ENCODE measurements at regions of chr6 and their contacts with region 1.

Region 1: GRCh38 chr6:145015739-145016558 is 719.4 kb downstream of the EPM2A start:
- DNase-seq: peak; percentile 56
- ATAC-seq: peak; percentile 99
- H3K4me3 Mint-ChIP-seq: no peak overlapping the region
- H3K27ac Mint-ChIP-seq: no peak overlapping the region
- H3K4me1 Mint-ChIP-seq: peaks cover 16% of the 10 kb centered on the region
- H3K27me3 Mint-ChIP-seq: peaks cover 14% of the 10 kb centered on the region

Region 2: GRCh38 chr6:144602523-144603180 is 413.3 kb before region 1 on chr6:
- CTCF ChIA-PET with region 1: no interaction called
- POLR2A ChIA-PET with region 1: no interaction called
- intact Hi-C with region 1: loop called in 1 of 2 experiments (anchors 5 kb)
- DNase-seq: peak; percentile 42
- ATAC-seq: peak; percentile 84
- H3K4me3 Mint-ChIP-seq: no peak overlapping the region
- H3K27ac Mint-ChIP-seq: no peak overlapping the region
- H3K4me1 Mint-ChIP-seq: peaks cover 49% of the 10 kb centered on the region
- H3K27me3 Mint-ChIP-seq: no peaks in the 10 kb centered on the region

Region 3: DNA sequence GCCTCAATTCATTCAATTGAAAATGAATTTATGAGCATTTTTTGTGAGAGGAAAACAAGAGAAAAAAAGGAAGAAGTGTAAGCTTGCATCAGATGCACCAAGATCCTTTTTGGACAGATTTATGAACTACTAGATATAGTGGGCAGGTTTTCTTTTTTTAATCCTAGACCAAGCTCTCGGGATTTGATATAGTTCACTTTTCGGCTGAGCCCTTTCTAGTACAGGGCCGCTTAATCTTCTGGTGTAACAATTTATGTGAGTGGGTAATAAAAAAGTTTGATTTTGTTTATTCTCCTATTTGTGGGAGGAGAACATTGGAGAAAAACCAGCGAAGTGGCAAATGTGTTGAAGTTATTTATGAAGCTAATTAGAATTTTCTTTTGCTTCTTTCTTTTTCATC is 192.8 kb before region 1 on chr6:
- CTCF ChIA-PET with region 1: no interaction called
- POLR2A ChIA-PET with region 1: no interaction called
- intact Hi-C with region 1: no loop called
- DNase-seq: no peak
- ATAC-seq: no peak
- H3K4me3 Mint-ChIP-seq: no peak overlapping the region
- H3K27ac Mint-ChIP-seq: no peak overlapping the region
- H3K4me1 Mint-ChIP-seq: no peaks in the 10 kb centered on the region
- H3K27me3 Mint-ChIP-seq: no peaks in the 10 kb centered on the region

Region 4: DNA sequence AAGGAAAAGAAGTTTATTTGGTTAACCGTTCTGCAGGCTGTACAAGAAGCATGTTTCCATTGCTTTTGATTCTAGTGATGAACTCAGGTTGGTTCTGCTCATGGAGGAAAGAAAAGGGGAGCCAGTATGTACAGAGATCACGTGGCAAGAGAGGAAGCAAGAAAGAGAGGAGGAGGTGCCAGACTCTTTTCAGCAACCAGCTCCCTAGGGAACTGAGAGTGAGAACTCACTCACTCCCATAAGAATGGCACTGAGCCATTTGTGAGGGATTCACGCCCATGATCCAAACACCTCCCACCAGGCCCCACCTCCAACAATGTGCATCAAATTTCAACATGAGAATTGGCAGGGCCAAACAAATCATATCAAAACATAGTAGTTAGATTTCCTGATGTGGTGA is 70.2 kb after region 1 on chr6:
- CTCF ChIA-PET with region 1: no interaction called
- POLR2A ChIA-PET with region 1: no interaction called
- intact Hi-C with region 1: no loop called
- DNase-seq: no peak
- ATAC-seq: no peak
- H3K4me3 Mint-ChIP-seq: no peak overlapping the region
- H3K27ac Mint-ChIP-seq: no peak overlapping the region
- H3K4me1 Mint-ChIP-seq: no peaks in the 10 kb centered on the region
- H3K27me3 Mint-ChIP-seq: peaks cover 5% of the 10 kb centered on the region

Measured in activated CD4-positive, alpha-beta T cell treated with anti-CD3 and anti-CD28 coated beads for 36 hours (primary cell).